HAP-1 (cell line): ENCODE measurements at regions of chr16 and their contacts with region 1.

Region 1: GRCh38 chr16:25464038-25464437 is 206.4 kb upstream of the ZKSCAN2 start:
- DNase-seq: no peak
- H3K4me3 ChIP-seq: no peak overlapping the region
- H3K4me1 ChIP-seq: no peaks in the 10 kb centered on the region
- H3K27me3 ChIP-seq: no peaks in the 10 kb centered on the region

Region 2: GRCh38 chr16:24863582-24864437 is 600.2 kb before region 1 on chr16:
- in situ Hi-C with region 1: no loop called
- DNase-seq: no peak
- H3K4me3 ChIP-seq: no peak overlapping the region
- H3K4me1 ChIP-seq: no peaks in the 10 kb centered on the region
- H3K27me3 ChIP-seq: no peaks in the 10 kb centered on the region

Region 3: DNA sequence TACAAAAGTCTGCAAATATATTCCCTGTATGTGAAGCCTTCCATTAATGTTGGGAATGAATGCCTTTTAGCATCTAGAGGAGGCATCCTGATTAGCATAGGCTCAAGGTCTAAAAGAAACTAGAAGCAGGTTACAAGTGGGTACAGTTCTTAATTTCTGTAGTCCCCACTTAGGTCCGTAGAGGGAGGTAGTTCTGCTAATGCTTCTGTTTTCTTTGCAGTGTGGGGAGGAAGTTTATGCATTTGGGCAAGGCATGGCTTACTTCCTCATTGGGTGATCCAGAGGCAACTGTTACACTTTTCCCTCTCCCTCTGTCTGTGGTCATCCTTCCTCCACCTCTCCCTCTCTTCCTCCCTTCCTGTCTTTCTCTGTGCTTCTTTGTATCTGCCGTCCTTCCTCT is 98.0 kb before region 1 on chr16:
- in situ Hi-C with region 1: loop called (anchors 25 kb)
- DNase-seq: no peak
- H3K4me3 ChIP-seq: no peak overlapping the region
- H3K4me1 ChIP-seq: no peaks in the 10 kb centered on the region
- H3K27me3 ChIP-seq: no peaks in the 10 kb centered on the region

Region 4: GRCh38 chr16:25413985-25414384 is 50.1 kb before region 1 on chr16:
- in situ Hi-C with region 1: no loop called
- DNase-seq: no peak
- H3K4me3 ChIP-seq: no peak overlapping the region
- H3K4me1 ChIP-seq: no peaks in the 10 kb centered on the region
- H3K27me3 ChIP-seq: no peaks in the 10 kb centered on the region